ENCODE measurements at regions of chrX and their contacts with region 1.

Region 1: GRCh38 chrX:15349046-15349445 is 13.7 kb upstream of the PIGA start:
- DNase-seq: peak in 5 of 9 donors; percentile 17 to 27 (median 22)
- ATAC-seq: peak; percentile 55
- H3K4me3 ChIP-seq: no peak overlapping the region
- H3K4me3 Mint-ChIP-seq: no peak overlapping the region
- H3K27ac ChIP-seq: no peak overlapping the region
- H3K27ac Mint-ChIP-seq: no peak overlapping the region
- H3K4me1 ChIP-seq: no peaks in the 10 kb centered on the region
- H3K4me1 Mint-ChIP-seq: peaks cover 0 to 6% (median 0%) of the 10 kb centered on the region in 7 donors
- H3K27me3 ChIP-seq: no peaks in the 10 kb centered on the region
- H3K27me3 Mint-ChIP-seq: peaks cover 0 to 10% (median 1%) of the 10 kb centered on the region in 5 donors

Region 2: GRCh38 chrX:15465347-15465746 is 116.3 kb after region 1 on chrX:
- CTCF ChIA-PET with region 1: no interaction called
- POLR2A ChIA-PET with region 1: no interaction called
- intact Hi-C with region 1: loop called in 1 of 2 experiments (anchors 1 kb)
- DNase-seq: no peak
- ATAC-seq: no peak
- H3K4me3 ChIP-seq: no peak overlapping the region
- H3K4me3 Mint-ChIP-seq: no peak overlapping the region
- H3K27ac ChIP-seq: no peak overlapping the region
- H3K27ac Mint-ChIP-seq: no peak overlapping the region
- H3K4me1 ChIP-seq: no peaks in the 10 kb centered on the region
- H3K4me1 Mint-ChIP-seq: peaks cover 0 to 2% (median 0%) of the 10 kb centered on the region in 7 donors
- H3K27me3 ChIP-seq: no peaks in the 10 kb centered on the region
- H3K27me3 Mint-ChIP-seq: peaks cover 0 to 3% (median 0%) of the 10 kb centered on the region in 5 donors

Region 3: DNA sequence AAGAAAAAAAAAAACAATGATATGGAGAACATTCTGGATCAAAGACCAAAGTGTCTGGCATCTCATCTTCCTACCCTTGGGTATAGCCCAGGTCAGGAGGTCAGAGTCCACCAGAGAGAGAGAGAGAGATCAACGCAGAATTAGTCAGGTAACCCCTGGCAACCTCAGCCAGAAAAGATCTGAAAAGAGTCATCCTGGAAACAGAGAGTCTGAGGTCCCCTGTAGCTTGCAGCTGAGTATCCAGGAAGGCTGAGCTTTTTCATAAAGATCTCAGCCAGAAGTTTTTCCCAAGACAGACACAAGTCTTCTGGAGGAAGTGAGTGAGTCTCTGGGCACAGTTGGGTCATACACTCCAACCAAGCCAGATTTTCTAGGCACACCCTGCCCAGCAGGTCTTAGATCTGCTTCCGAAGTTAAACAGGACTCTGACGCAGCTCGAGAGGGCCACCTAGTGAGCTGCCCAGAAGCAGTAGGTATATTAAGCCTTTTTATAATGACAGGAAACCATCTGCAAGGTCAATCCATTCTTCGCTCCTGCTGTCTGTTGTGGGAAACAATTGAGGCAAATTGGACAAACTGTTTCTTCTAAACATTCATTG is 216.0 kb after region 1 on chrX:
- CTCF ChIA-PET with region 1: no interaction called
- POLR2A ChIA-PET with region 1: no interaction called
- intact Hi-C with region 1: loop called in 1 of 2 experiments (anchors 10 kb)
- DNase-seq: peak in 3 of 9 donors; percentile 3 to 7 (median 5)
- ATAC-seq: peak; percentile 50
- H3K4me3 ChIP-seq: no peak overlapping the region
- H3K4me3 Mint-ChIP-seq: no peak overlapping the region
- H3K27ac ChIP-seq: no peak overlapping the region
- H3K27ac Mint-ChIP-seq: no peak overlapping the region
- H3K4me1 ChIP-seq: no peaks in the 10 kb centered on the region
- H3K4me1 Mint-ChIP-seq: no peaks in the 10 kb centered on the region
- H3K27me3 ChIP-seq: no peaks in the 10 kb centered on the region
- H3K27me3 Mint-ChIP-seq: peaks cover 0 to 14% (median 5%) of the 10 kb centered on the region in 5 donors

Measured in naive thymus-derived CD4-positive, alpha-beta T cell (primary cell).